ENCODE measurements at regions of chr11 and their contacts with region 1.

Region 1: GRCh38 chr11:70397983-70398833 is at the start of gene CTTN:
- DNase-seq: peak; percentile 79 to 95 (median 84)
- ATAC-seq: peak; percentile 86
- H3K4me3 ChIP-seq: peak within 1 kb of the TSS; percentile 68 to 81
- H3K27ac ChIP-seq: peak within 1 kb of the TSS; percentile 81 to 82
- H3K4me1 ChIP-seq: peaks cover 13 to 50% of the 10 kb centered on the region in 2 donors
- H3K27me3 ChIP-seq: peaks cover 0 to 92% of the 10 kb centered on the region in 2 donors
- CTCF ChIP-seq: no peak
- polyA plus RNA-seq, gene CTTN: 162 to 214 (median 195) TPM

Region 2: DNA sequence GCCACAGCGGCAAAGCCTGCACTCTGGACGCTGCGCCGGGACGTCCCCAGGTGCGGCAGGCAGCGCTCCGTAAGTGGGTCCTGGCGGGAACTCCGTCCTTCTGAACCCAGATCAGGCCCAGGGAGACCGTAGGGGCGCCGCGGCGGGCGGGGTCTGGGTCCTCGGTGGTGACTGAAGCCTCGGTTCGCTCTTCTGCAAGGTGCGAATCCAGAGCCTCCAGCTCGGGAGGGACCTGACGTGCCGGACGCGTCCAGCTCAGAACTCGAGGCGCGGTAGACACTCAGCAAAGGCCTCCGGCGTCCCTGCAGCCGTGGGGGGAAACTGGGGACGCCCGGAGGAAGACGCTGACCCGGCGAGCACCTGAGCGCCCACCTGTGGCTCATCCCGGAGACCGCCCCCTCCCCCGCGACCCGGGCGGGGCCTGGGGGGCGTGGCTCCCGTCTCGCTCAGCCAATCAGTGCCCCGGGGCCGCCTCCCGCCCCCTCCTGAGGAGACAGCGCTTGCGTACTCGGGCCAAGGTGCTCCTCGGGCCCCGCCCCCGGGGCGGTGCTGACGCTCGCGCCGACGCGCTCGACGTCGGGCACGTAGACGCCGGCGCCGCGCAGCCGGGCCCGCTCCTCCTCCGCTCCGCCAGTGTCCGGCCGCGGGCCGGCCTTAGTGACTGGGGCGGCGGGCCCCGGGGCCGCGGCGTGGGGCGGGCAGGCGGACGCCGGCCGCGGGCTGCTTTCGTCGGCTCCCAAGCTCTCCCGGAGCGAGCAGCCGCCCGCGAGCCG is 127.9 kb before region 1 on chr11 and contains the start of gene PPFIA1:
- intact Hi-C with region 1: loop called in 1 of 2 experiments (anchors 10 kb)
- DNase-seq: peak; percentile 93 to 98 (median 96)
- ATAC-seq: peak; percentile 98
- H3K4me3 ChIP-seq: peak within 1 kb of the TSS; percentile 69 to 79
- H3K27ac ChIP-seq: peak within 1 kb of the TSS; percentile 74 to 87
- H3K4me1 ChIP-seq: peaks cover 7 to 42% of the 10 kb centered on the region in 2 donors
- H3K27me3 ChIP-seq: peaks cover 0 to 35% of the 10 kb centered on the region in 2 donors
- CTCF ChIP-seq: no peak
- polyA plus RNA-seq, gene PPFIA1: 45.9 to 53.4 (median 48.5) TPM